Aorta (tissue), 5 donors: ENCODE measurements at regions of chr5 and their contacts with region 1.

Region 1: GRCh38 chr5:14760548-14761017 is 96.1 kb downstream of the OTULIN start:
- DNase-seq: no peak
- ATAC-seq: peak; percentile 69
- H3K4me3 ChIP-seq: no peak overlapping the region
- H3K27ac ChIP-seq: no peak overlapping the region
- H3K4me1 ChIP-seq: no peaks in the 10 kb centered on the region
- H3K27me3 ChIP-seq: no peaks in the 10 kb centered on the region

Region 2: DNA sequence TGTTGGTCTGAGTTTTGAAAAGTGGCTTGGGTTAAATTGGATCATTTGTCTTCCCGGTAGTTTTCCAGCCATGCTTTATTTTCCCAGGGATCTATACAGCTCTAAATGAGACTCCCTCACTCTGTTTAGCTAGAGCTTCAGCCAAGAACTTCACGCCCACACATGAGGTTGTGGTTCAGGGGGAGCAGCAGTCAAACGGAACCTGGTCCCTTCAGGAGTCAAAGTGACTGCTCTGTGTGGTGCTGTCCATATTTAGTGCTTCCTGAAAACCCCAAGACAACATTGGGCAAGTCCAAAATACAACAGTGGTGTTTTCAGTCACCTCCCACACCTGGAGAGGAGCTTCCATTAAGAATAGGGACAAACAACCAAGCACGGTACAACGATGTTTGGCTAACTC is 20.5 kb after region 1 on chr5:
- intact Hi-C with region 1: no loop called
- DNase-seq: no peak
- ATAC-seq: no peak
- H3K4me3 ChIP-seq: no peak overlapping the region
- H3K27ac ChIP-seq: peak overlapping the region in 1 of 2 donors; percentile 37
- H3K4me1 ChIP-seq: peaks cover 0 to 5% of the 10 kb centered on the region in 2 donors
- H3K27me3 ChIP-seq: no peaks in the 10 kb centered on the region

Region 3: DNA sequence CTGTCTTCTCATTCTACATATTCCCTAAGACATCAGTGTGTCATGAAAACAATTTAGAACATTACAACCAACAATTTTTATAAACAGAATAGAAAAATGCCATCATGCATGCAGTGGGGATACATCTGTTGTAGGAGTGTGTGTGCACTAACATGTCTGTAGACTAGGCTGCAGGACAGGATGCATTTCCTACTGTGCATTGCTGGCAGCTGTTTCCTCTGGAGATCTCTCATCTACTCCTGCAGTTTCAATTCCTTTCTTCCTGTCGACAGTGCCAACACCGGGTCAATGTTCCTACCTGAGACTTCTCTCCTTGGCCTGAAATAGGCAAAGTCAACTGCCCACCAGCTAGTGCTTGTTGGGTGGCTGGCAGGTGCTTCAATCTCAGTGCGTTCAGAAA is 41.2 kb after region 1 on chr5:
- intact Hi-C with region 1: loop called in 1 of 2 experiments (anchors 5 kb)
- DNase-seq: no peak
- ATAC-seq: no peak
- H3K4me3 ChIP-seq: no peak overlapping the region
- H3K27ac ChIP-seq: no peak overlapping the region
- H3K4me1 ChIP-seq: peaks cover 0 to 2% of the 10 kb centered on the region in 2 donors
- H3K27me3 ChIP-seq: no peaks in the 10 kb centered on the region

Region 4: GRCh38 chr5:15092801-15093200 is 332.2 kb after region 1 on chr5:
- intact Hi-C with region 1: no loop called
- DNase-seq: no peak
- ATAC-seq: no peak
- H3K4me3 ChIP-seq: no peak overlapping the region
- H3K27ac ChIP-seq: no peak overlapping the region
- H3K4me1 ChIP-seq: no peaks in the 10 kb centered on the region
- H3K27me3 ChIP-seq: no peaks in the 10 kb centered on the region